Caco-2 (cell line): ENCODE measurements at regions of chr4 and their contacts with region 1.

Region 1: GRCh38 chr4:139177868-139178611 is 1.0 kb upstream of the ELF2 start:
- DNase-seq: peak; percentile 96 to 97
- H3K4me3 ChIP-seq: peak overlapping the region; percentile 84
- H3K4me3 Mint-ChIP-seq: peak overlapping the region; percentile 87
- H3K27ac Mint-ChIP-seq: peak overlapping the region; percentile 92
- H3K4me1 ChIP-seq: peaks cover 13% of the 10 kb centered on the region; the same call in 1 of the 2 replicates
- H3K4me1 Mint-ChIP-seq: peaks cover 6% of the 10 kb centered on the region
- H3K27me3 ChIP-seq: no peaks in the 10 kb centered on the region
- H3K27me3 Mint-ChIP-seq: no peaks in the 10 kb centered on the region
- CTCF ChIP-seq: no peak

Region 2: GRCh38 chr4:139083956-139084803 is 93.9 kb before region 1 on chr4:
- CTCF ChIA-PET with region 1: no interaction called
- POLR2A ChIA-PET with region 1: interaction called, 3 read pairs
- intact Hi-C with region 1: loop called (anchors 1 kb)
- DNase-seq: peak; percentile 91 to 93
- H3K4me3 ChIP-seq: peak overlapping the region; percentile 88
- H3K4me3 Mint-ChIP-seq: peak overlapping the region; percentile 97
- H3K27ac Mint-ChIP-seq: peak overlapping the region; percentile 98
- H3K4me1 ChIP-seq: peaks cover 14% of the 10 kb centered on the region; the same call in 1 of the 2 replicates
- H3K4me1 Mint-ChIP-seq: peaks cover 19% of the 10 kb centered on the region
- H3K27me3 ChIP-seq: no peaks in the 10 kb centered on the region
- H3K27me3 Mint-ChIP-seq: no peaks in the 10 kb centered on the region
- CTCF ChIP-seq: peak; percentile 21

Region 3: GRCh38 chr4:139153420-139154133 is 24.5 kb before region 1 on chr4:
- CTCF ChIA-PET with region 1: interaction called, 11 read pairs
- POLR2A ChIA-PET with region 1: interaction called, 40 read pairs
- intact Hi-C with region 1: loop called (anchors 1 kb)
- DNase-seq: peak in 1 of 2 experiments; percentile 60
- H3K4me3 ChIP-seq: no peak overlapping the region
- H3K4me3 Mint-ChIP-seq: peak overlapping the region; percentile 32
- H3K27ac Mint-ChIP-seq: peak overlapping the region; percentile 90
- H3K4me1 ChIP-seq: peaks cover 60% of the 10 kb centered on the region
- H3K4me1 Mint-ChIP-seq: peaks cover 39% of the 10 kb centered on the region
- H3K27me3 ChIP-seq: no peaks in the 10 kb centered on the region
- H3K27me3 Mint-ChIP-seq: no peaks in the 10 kb centered on the region
- CTCF ChIP-seq: no peak

Region 4: GRCh38 chr4:139167774-139168444 is 10.1 kb before region 1 on chr4:
- CTCF ChIA-PET with region 1: interaction called, 13 read pairs
- POLR2A ChIA-PET with region 1: interaction called, 3 read pairs
- intact Hi-C with region 1: no loop called
- DNase-seq: peak in 1 of 2 experiments; percentile 59
- H3K4me3 ChIP-seq: no peak overlapping the region
- H3K4me3 Mint-ChIP-seq: no peak overlapping the region
- H3K27ac Mint-ChIP-seq: no peak overlapping the region
- H3K4me1 ChIP-seq: peaks cover 22% of the 10 kb centered on the region
- H3K4me1 Mint-ChIP-seq: peaks cover 12% of the 10 kb centered on the region
- H3K27me3 ChIP-seq: no peaks in the 10 kb centered on the region
- H3K27me3 Mint-ChIP-seq: no peaks in the 10 kb centered on the region
- CTCF ChIP-seq: peak; percentile 55 to 59

Region 5: DNA sequence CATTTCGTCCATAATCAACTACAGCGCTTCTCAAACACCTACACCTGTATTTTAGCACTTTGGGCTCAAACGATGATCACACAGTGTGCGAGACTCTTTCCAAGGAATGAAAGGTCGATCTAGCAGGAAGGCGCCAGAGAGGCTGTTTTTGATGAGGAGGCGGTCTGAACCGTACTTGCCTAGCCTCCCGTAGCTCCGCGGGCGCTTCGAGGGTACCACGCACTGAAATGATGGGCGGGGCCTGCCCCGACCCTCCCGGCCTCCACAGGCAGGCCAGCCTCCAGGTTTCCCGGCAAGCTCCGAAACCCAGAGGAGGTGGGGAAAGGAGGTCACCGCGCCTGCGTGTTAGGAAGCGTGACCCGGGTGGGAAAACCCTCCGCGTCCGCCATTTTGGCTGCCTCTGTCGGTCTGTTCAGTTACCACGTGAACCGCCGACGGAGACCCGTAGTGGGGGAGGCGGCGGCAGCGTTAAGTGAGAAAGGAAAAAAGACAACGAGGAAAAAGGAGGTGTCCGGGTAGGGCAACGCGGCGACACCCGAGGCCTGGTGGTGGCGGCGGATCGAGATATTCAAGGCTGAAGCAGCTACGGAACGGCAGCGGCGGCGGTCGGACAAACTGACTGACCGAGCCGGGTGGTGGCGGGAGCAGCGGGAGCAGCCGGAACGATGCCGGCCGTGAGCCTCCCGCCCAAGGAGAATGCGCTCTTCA is 123.2 kb after region 1 on chr4 and contains the start of gene NAA15:
- CTCF ChIA-PET with region 1: interaction called, 7 read pairs
- POLR2A ChIA-PET with region 1: interaction called, 44 read pairs
- intact Hi-C with region 1: loop called (anchors 1 kb)
- DNase-seq: peak; percentile 98
- H3K4me3 ChIP-seq: peak within 1 kb of the TSS; percentile 99
- H3K4me3 Mint-ChIP-seq: peak within 1 kb of the TSS; percentile 96
- H3K27ac Mint-ChIP-seq: peak within 1 kb of the TSS; percentile 97
- H3K4me1 ChIP-seq: peaks cover 11% of the 10 kb centered on the region
- H3K4me1 Mint-ChIP-seq: no peaks in the 10 kb centered on the region
- H3K27me3 ChIP-seq: no peaks in the 10 kb centered on the region
- H3K27me3 Mint-ChIP-seq: no peaks in the 10 kb centered on the region
- CTCF ChIP-seq: no peak
- total RNA-seq, gene NAA15: 63.1 and 71.6 TPM in 2 replicates